GM18951 (cell line): ENCODE measurements at regions of chr3 and their contacts with region 1.

Region 1: DNA sequence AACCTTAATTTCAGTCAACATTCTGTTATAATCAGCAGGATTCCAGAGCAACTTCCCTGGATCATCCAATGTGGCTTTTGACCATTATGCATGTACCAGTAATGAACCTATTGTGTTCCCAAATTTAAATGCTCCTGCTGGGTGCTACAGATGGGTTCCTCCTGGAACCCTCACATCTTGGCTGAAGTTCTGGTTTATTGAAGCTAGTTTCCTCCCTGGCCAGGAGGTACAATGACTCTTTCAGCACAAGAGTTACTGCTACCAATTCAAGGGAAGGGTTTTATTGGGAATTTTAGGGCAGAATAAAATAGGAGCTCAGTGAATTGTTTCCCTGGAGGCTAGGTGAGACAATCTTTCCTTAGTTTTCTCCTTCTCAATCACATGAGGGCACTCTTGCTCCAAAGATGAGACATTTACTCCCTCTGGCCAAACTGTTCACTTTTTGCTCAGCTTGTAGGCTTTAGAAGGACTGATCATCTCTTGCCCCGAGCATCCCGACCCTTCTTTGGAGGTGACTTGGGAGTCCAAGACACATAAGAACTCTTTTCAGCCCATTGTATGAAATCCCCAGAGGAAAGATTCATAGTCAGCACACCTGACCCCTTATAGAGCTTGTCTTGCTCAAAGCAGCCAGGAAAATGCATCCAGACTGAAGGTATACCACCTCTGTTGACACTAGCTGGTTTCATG is 8.8 kb upstream of the NPHP3 start:
- POLR2A ChIP-seq: no peak

Region 2: DNA sequence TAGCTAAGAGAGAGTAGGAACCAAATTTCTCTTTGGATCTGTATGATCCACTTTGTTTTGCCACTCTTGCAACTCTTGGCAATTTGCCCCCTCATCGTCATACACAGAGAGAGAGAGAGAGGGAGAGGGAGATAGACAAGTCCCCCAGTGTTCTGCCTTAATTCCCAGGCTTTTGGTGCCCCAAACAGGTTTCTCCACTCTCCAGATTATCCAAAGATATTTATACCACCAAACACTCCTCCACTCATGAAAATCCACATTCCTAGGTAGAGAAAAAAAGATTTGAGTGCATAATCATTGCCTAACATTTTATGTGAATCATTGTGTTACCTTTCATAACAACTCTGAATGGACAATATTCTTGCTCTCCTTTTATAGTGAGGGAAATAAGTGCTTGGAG is 398.5 kb before region 1 on chr3:
- in situ Hi-C with region 1: no loop called
- POLR2A ChIP-seq: no peak

Region 3: GRCh38 chr3:132394320-132394719 is 336.7 kb before region 1 on chr3:
- in situ Hi-C with region 1: no loop called
- POLR2A ChIP-seq: no peak

Region 4: GRCh38 chr3:133401374-133402135 is 670.5 kb after region 1 on chr3:
- in situ Hi-C with region 1: loop called (anchors 10 kb)
- POLR2A ChIP-seq: no peak